ENCODE measurements at regions of chr10 and their contacts with region 1.

Region 1: GRCh38 chr10:69408318-69409175 is 8.2 kb downstream of the TACR2 start:
- DNase-seq: peak; percentile 93
- H3K4me3 Mint-ChIP-seq: peak overlapping the region; percentile 46
- H3K27ac Mint-ChIP-seq: peak overlapping the region; percentile 76
- H3K4me1 Mint-ChIP-seq: peaks cover 15% of the 10 kb centered on the region
- H3K27me3 Mint-ChIP-seq: peaks cover 2% of the 10 kb centered on the region

Region 2: DNA sequence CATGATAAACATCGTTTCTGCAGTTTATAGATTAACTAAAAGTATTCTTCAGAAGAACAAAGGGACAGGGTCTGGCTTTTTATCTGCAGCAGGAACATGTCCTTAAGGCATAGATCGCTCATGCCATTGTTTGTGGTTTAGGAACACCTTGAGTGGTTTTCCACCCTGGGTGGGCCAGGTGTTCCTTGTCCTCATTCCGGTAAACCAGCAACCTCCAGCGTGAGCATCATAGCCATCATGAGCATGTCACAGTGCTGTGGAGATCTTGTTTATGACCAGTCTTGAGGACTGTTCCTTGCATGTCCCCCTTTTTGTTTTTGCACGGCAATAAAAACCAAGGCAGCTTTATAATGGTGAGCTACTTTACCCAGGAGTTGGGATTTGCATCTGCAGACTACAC is 547.3 kb before region 1 on chr10:
- CTCF ChIA-PET with region 1: no interaction called
- POLR2A ChIA-PET with region 1: no interaction called
- intact Hi-C with region 1: no loop called
- DNase-seq: no peak
- H3K4me3 Mint-ChIP-seq: no peak overlapping the region
- H3K27ac Mint-ChIP-seq: no peak overlapping the region
- H3K4me1 Mint-ChIP-seq: no peaks in the 10 kb centered on the region
- H3K27me3 Mint-ChIP-seq: no peaks in the 10 kb centered on the region

Region 3: DNA sequence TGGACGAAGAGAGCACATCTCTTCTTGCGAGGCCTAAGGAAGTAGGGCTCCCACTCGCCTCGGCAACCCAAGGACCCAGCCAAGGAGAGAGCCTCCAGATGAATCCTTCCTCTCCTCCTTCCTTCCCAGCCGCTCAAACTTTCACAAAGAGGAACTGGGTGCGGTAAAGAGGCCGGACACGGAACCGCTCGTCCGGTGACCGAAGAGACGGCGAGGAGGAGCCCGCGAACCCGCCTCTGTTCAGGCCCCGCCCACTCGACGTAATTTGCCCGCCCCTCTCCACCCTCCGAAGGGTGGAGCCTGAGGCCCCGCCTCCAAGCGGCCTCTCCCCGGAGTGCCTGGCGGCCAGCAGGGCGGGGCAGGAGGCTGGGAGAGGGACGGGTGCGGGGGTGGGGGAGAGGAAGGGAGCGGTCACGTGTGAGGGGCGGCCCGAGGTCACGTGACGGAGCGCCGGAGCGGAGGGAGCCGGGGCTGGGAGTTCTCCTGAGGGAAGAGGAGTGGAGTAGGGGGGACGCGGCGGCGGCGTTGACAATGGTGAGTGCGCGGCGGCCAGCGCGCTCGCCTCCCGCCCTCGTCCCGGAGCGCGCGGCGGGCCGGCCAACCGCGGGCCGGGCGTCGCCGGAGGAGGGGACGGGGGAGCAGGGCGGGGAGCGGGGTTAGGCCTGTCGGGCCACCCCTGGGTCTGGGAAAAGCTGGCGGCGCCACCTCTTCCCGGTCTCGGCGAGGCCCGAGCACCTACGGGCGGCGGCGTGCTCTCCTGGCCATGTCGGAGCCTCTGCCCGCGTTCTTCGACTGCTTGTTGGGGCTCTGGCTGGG is 284.6 kb before region 1 on chr10 and contains the start of gene VPS26A:
- CTCF ChIA-PET with region 1: no interaction called
- POLR2A ChIA-PET with region 1: no interaction called
- intact Hi-C with region 1: loop called (anchors 1 kb)
- DNase-seq: peak; percentile 99
- H3K4me3 Mint-ChIP-seq: peak within 1 kb of the TSS; percentile 88
- H3K27ac Mint-ChIP-seq: peak within 1 kb of the TSS; percentile 92
- H3K4me1 Mint-ChIP-seq: peaks cover 25% of the 10 kb centered on the region
- H3K27me3 Mint-ChIP-seq: no peaks in the 10 kb centered on the region
- total RNA-seq, gene VPS26A: 44.6 to 51.4 TPM

Region 4: DNA sequence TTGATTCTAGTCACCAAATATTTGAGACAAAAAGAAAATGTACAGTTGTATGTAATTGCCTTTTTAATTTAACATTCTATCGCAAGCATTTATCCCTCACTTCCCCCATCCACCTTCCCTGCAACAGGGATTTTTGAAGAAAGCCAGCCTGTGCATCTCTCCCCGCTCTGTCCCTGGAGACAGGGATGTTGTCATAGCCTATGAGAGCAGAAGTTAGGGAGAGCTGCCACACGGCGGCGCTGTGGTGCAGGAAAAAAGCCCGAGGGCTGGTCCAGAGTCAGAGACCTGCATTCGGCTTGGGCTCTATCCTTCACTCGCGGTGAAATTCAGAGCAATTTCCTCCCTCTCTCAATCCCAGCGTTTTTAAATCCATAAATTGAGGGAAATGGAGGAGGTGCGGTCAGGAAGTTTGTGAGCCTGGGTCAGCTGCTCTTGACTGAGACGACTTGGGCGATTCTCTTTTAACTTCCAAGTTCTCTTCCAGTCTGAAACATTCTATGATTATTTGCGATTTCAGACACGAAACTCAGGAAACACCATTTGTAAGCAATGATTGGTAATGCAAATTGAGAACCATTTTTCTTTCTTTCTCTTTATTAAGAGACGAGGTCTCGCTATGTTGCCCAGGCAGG is 170.9 kb before region 1 on chr10:
- CTCF ChIA-PET with region 1: interaction called, 28 read pairs
- POLR2A ChIA-PET with region 1: no interaction called
- intact Hi-C with region 1: loop called (anchors 1 kb)
- DNase-seq: peak; percentile 93
- H3K4me3 Mint-ChIP-seq: no peak overlapping the region
- H3K27ac Mint-ChIP-seq: no peak overlapping the region
- H3K4me1 Mint-ChIP-seq: peaks cover 23% of the 10 kb centered on the region
- H3K27me3 Mint-ChIP-seq: no peaks in the 10 kb centered on the region

Region 5: DNA sequence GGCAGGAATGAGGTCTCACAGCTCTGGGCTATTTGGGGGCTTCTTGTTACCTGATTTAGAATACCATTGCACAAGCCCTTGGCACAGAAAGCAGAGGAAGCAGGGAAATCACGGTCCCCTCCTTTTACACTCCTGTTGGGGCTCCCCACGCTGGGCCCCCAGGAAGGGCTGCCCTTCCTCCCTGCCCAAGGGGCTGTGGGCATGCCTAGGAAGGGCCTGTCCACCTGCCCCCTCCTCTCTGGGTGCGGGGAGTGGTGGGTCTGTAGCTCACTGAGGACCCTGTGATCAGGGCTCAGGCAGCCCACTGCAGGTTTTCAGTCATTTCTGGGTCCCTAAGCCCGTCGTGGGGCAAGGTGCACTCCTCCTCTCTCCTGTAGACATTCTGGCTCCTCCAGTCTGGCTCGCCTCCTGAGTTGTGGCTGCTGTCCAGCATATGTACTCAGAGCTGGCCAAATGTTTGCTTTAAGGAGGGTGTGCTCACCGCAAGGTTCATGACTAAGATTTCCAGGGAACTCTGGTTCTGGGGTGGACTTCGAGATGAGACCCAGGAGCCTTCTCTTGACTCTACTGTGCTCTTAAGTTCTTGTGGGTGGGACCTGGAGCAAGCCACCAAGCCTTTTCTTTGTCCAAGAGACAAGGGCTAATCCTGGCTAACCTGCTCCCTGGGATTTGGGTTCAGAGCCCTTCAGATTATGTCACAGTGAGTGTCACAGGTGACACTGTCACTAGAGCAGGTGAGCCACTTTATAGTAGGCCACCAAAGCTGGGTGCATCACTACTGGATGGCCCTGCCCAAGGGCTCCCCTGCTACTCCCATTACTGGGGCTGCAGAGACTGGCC is 47.8 kb before region 1 on chr10:
- CTCF ChIA-PET with region 1: no interaction called
- POLR2A ChIA-PET with region 1: no interaction called
- intact Hi-C with region 1: no loop called
- DNase-seq: no peak
- H3K4me3 Mint-ChIP-seq: no peak overlapping the region
- H3K27ac Mint-ChIP-seq: no peak overlapping the region
- H3K4me1 Mint-ChIP-seq: peaks cover 47% of the 10 kb centered on the region
- H3K27me3 Mint-ChIP-seq: no peaks in the 10 kb centered on the region

Region 6: DNA sequence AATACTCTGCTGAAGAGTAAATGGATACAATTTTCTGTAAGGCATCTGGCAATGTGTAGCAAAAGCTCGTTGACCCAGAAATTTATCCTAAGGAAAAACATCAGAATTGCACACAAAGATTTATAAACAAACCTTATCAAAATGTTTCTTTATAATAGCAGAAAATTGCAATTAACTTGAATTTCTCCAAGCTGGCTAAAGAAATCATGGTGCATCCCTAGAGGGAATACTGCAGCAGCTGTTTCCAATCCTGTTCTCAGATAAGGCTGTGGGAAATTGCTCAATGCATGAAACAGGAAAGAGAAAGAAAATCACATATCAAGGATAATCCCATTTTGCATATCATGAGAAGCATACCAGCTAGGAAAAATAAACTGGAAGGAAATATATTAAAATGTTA is 10.6 kb before region 1 on chr10:
- CTCF ChIA-PET with region 1: interaction called, 27 read pairs
- POLR2A ChIA-PET with region 1: interaction called, 3 read pairs
- intact Hi-C with region 1: no loop called
- DNase-seq: no peak
- H3K4me3 Mint-ChIP-seq: no peak overlapping the region
- H3K27ac Mint-ChIP-seq: no peak overlapping the region
- H3K4me1 Mint-ChIP-seq: no peaks in the 10 kb centered on the region
- H3K27me3 Mint-ChIP-seq: no peaks in the 10 kb centered on the region

Region 7: DNA sequence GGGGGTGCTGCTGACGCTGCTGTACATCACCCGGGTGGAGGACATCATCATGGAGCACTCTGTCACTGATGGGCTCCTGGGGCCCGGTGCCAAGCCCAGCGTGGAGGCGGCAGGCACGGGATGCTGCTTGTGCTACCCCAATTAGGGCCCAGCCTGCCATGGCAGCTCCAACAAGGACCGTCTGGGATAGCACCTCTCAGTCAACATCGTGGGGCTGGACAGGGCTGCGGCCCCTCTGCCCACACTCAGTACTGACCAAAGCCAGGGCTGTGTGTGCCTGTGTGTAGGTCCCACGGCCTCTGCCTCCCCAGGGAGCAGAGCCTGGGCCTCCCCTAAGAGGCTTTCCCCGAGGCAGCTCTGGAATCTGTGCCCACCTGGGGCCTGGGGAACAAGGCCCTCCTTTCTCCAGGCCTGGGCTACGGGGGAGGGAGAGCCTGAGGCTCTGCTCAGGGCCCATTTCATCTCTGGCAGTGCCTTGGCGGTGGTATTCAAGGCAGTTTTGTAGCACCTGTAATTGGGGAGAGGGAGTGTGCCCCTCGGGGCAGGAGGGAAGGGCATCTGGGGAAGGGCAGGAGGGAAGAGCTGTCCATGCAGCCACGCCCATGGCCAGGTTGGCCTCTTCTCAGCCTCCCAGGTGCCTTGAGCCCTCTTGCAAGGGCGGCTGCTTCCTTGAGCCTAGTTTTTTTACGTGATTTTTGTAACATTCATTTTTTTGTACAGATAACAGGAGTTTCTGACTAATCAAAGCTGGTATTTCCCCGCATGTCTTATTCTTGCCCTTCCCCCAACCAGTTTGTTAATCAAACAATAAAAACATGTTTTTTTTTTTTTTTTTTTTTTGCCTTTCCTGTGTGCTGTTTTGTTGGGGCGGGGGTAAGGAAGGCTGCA is 98.5 kb after region 1 on chr10:
- CTCF ChIA-PET with region 1: interaction called, 50 read pairs
- POLR2A ChIA-PET with region 1: interaction called, 6 read pairs
- intact Hi-C with region 1: loop called (anchors 1 kb)
- DNase-seq: no peak
- H3K4me3 Mint-ChIP-seq: peak overlapping the region; percentile 54
- H3K27ac Mint-ChIP-seq: peak overlapping the region; percentile 64
- H3K4me1 Mint-ChIP-seq: peaks cover 10% of the 10 kb centered on the region
- H3K27me3 Mint-ChIP-seq: no peaks in the 10 kb centered on the region

Measured in activated CD4-positive, alpha-beta memory T cell treated with anti-CD3 and anti-CD28 coated beads for 36 hours (primary cell).